Panc1 (cell line): ENCODE measurements at regions of chr19 and their contacts with region 1.

Region 1: DNA sequence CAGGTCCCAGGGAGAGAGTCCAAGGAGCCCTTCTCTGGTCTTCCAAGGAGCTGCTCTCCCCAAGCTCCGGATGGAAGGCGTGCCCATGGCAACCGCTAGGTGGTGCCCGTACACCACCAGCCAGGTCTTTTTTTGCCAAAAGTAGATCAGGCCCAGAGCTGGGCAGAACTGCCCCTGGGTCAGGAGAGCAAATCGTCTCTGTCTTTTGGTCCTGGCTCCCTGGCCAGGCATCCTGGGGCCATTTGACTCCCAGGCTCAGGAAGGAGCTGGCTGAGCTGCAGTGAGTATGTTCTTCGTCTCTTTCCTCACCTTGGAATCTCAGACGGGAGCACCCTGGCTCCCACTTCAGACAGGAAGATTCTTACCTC is 24.6 kb upstream of the BCL3 start:
- DNase-seq: peak; percentile 73
- ATAC-seq: peak; percentile 81
- H3K4me3 ChIP-seq: no peak overlapping the region
- H3K27ac ChIP-seq: peak overlapping the region; percentile 77
- H3K4me1 ChIP-seq: peaks cover 41% of the 10 kb centered on the region
- H3K27me3 ChIP-seq: no peaks in the 10 kb centered on the region
- CTCF ChIP-seq: peak; percentile 94

Region 2: GRCh38 chr19:44701228-44701627 is 22.7 kb before region 1 on chr19:
- CTCF ChIA-PET with region 1: no interaction called
- POLR2A ChIA-PET with region 1: no interaction called
- in situ Hi-C with region 1: no loop called
- intact Hi-C with region 1: no loop called
- DNase-seq: no peak
- ATAC-seq: no peak
- H3K4me3 ChIP-seq: no peak overlapping the region
- H3K27ac ChIP-seq: no peak overlapping the region
- H3K4me1 ChIP-seq: no peaks in the 10 kb centered on the region
- H3K27me3 ChIP-seq: no peaks in the 10 kb centered on the region
- CTCF ChIP-seq: no peak

Region 3: DNA sequence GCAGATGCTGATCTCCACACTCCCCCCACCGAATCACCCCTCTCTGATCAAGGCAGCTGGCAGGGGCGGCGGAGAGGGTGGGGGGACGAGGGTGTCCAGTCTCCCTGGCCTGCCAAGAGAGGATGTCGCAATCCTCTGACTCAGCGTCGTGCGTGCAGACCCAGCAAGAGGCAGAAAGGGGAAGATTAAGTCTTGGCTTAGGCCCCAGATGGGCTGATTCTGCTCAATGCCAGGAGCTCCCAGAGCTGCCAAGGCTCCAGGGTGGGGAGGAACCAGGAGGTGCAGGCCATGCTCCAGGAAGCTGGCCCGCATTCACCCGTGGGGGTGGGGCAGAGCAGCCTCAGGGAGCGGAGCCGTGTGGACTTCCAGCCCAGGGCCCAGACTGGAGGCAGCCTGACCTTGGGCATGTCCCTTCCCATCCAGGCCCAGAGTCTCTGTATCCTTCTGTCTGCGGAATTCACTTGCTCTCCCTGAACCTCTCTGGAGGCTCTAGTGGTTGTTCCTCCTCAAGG is 18.0 kb after region 1 on chr19:
- CTCF ChIA-PET with region 1: interaction called, 14 read pairs
- POLR2A ChIA-PET with region 1: no interaction called
- in situ Hi-C with region 1: no loop called
- intact Hi-C with region 1: no loop called
- DNase-seq: peak; percentile 89
- ATAC-seq: peak; percentile 90
- H3K4me3 ChIP-seq: no peak overlapping the region
- H3K27ac ChIP-seq: peak overlapping the region; percentile 90
- H3K4me1 ChIP-seq: peaks cover 64% of the 10 kb centered on the region
- H3K27me3 ChIP-seq: no peaks in the 10 kb centered on the region
- CTCF ChIP-seq: no peak

Region 4: GRCh38 chr19:44764975-44765948 is 41.3 kb after region 1 on chr19:
- CTCF ChIA-PET with region 1: interaction called, 34 read pairs
- POLR2A ChIA-PET with region 1: interaction called, 6 read pairs
- in situ Hi-C with region 1: no loop called
- intact Hi-C with region 1: loop called (anchors 2 kb)
- DNase-seq: no peak
- ATAC-seq: no peak
- H3K4me3 ChIP-seq: no peak overlapping the region
- H3K27ac ChIP-seq: 0 out of 2 replicates have a peak overlapping the region, but pooled peaks have one; percentile 17
- H3K4me1 ChIP-seq: peaks cover 6% of the 10 kb centered on the region
- H3K27me3 ChIP-seq: no peaks in the 10 kb centered on the region
- CTCF ChIP-seq: no peak